ENCODE measurements at regions of chr1 and their contacts with region 1.

Region 1: DNA sequence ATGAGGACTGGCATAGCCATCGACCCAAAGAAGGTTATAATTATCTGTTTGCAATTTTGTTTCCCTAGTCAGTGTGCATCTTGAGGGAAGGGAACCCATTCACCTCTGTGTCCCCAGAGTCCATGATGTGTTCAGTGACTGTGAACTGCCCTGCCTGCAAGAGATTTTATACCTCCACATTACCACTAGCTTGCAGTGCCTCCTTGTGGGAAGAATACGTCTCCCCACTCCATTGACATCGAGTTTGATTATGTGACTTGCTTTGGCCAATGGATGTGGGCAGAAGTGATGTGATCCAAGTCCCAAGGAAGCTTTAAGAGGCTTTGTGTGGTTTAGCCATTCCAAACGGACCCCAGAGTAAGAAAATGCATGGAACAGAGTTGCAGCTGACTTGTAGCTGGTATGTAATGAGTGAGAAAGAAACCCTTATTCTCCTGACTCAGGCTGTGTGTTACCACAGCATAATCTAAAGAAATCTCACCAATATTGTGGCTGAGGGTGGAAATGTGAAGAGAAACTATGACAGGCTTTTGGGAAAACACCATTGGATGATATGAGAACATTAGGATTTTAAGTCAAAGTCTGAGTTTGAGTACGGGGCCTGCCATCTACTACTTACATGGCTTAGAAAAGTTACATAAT is 47.8 kb upstream of the NRDC start:
- DNase-seq: no peak
- H3K4me3 Mint-ChIP-seq: no peak overlapping the region
- H3K27ac Mint-ChIP-seq: no peak overlapping the region
- H3K4me1 Mint-ChIP-seq: no peaks in the 10 kb centered on the region
- H3K27me3 Mint-ChIP-seq: peaks cover 16% of the 10 kb centered on the region

Region 2: DNA sequence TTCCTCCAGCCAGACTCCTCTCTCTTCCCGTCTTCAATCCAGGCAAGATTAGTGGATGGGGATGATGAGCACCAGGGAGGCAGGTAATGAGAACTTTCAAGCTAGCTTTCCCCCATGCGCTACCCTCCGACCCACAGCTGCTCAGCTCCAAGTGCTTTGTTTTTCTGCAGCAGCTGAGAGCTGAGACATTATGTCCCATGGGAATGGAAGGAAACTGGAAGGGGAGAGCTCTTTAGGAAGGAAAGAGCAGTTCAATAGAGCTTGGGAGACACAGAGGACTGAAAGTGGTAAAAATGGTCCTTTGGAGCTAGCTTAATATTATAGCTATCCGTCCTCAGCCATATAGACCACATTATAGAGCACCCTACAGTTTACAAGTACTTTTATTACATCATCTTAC is 24.4 kb after region 1 on chr1:
- intact Hi-C with region 1: loop called (anchors 1 kb)
- DNase-seq: no peak
- H3K4me3 Mint-ChIP-seq: no peak overlapping the region
- H3K27ac Mint-ChIP-seq: no peak overlapping the region
- H3K4me1 Mint-ChIP-seq: no peaks in the 10 kb centered on the region
- H3K27me3 Mint-ChIP-seq: peaks cover 16% of the 10 kb centered on the region

Region 3: DNA sequence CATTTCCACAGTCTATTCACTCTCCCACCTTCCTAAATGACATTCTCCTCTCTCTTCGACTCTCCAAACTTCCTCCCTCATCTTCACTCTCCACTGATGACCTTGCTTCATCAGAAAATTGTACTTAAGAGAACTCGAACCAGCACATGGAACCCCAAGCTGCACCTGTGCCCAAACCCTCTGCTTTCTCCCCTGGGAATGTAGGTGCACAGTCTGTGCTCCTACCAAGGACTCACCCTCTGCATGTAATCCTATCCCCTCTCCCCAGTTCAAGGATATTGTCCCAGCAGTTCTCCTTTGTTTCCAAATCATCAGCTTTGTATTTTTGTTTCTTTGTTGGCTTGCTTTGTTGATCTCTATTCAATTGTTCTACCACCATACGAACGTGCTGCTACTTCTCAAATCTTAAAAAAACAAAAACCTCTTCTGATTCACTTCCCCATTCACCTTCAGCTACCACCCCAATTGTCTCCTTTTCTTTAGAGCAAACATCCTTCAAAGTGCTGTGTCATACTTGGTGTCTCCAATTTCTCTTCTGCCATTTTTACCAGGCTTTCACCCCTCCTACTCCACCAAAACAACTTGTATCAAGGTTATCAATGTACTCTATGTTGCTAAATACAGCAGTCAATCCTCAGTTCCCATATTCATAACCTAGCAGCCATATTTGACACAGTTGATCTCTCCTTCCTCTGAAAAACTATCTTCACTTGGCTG is 37.5 kb after region 1 on chr1:
- intact Hi-C with region 1: no loop called
- DNase-seq: no peak
- H3K4me3 Mint-ChIP-seq: no peak overlapping the region
- H3K27ac Mint-ChIP-seq: no peak overlapping the region
- H3K4me1 Mint-ChIP-seq: no peaks in the 10 kb centered on the region
- H3K27me3 Mint-ChIP-seq: no peaks in the 10 kb centered on the region

Measured in activated T-helper 2 cell treated with anti-CD3 and anti-CD28 coated beads, Interferon-gamma antibody, Interleukin-2, Interleukin-4, amounts not matched to agents 10 μg/mL and 5 μg/mL and 100 μg/mL, durations not matched to agents 14 hours and 24 hours and 36 hours (primary cell).